ENCODE measurements at regions of chr21 and their contacts with region 1.

Region 1: DNA sequence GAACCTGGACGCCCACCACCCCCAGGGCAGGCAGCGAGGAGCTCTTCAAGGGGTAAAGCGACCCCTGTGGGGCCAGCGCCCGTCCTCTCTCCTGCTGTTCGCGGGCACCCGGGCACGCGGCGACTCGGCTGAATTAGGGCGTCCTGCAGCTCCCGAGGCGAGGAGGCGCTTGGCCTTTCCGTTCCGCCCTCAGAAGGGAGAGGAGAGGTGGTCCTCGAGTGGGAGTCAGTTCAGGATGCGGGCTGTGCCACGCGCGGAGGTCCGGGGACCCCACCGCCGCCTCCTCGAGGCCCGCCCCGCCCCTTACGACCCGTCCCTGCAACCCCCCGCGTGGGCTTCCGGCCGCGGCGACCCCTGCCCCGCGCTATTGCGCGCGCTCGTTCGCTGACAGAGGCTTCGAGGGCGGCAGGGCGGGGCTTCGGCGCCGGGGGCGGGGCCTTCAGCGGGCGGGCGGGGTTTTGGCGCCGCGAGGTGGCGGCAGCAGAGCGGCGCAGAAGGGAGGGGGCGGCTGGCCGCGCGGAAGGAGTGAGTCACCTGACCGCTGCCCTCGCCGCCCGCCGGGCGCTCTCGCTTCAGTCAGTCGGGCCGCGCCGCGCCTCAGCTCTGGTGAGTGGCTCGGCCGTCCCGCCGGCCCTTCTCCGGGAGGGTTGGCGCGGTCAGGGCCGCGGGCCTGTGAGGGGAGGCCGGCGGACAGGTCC is at the start of gene BACH1:
- DNase-seq: peak; percentile 76 to 83 (median 80)
- H3K4me3 ChIP-seq: peak within 1 kb of the TSS; percentile 32 to 67
- H3K4me3 Mint-ChIP-seq: peak within 1 kb of the TSS; percentile 86 to 95 (median 90)
- H3K27ac ChIP-seq: peak within 1 kb of the TSS; percentile 47
- H3K27ac Mint-ChIP-seq: peak within 1 kb of the TSS; percentile 70 to 94 (median 85)
- H3K4me1 ChIP-seq: peaks cover 61% of the 10 kb centered on the region
- H3K4me1 Mint-ChIP-seq: peaks cover 50 to 84% (median 68%) of the 10 kb centered on the region in 4 donors
- H3K27me3 ChIP-seq: no peaks in the 10 kb centered on the region
- H3K27me3 Mint-ChIP-seq: no peaks in the 10 kb centered on the region
- total RNA-seq, gene BACH1: 46.5 to 49.0 TPM

Region 2: GRCh38 chr21:28992526-28993292 is 305.8 kb before region 1 on chr21 and contains the start of gene LTN1:
- CTCF ChIA-PET with region 1: no interaction called
- POLR2A ChIA-PET with region 1: interaction called, 4 read pairs
- intact Hi-C with region 1: loop called (anchors 2 kb)
- DNase-seq: peak; percentile 98 to 99 (median 99)
- H3K4me3 ChIP-seq: peak within 1 kb of the TSS; percentile 87 to 98
- H3K4me3 Mint-ChIP-seq: peak within 1 kb of the TSS; percentile 90 to 98 (median 96)
- H3K27ac ChIP-seq: peak within 1 kb of the TSS; percentile 82
- H3K27ac Mint-ChIP-seq: peak within 1 kb of the TSS; percentile 85 to 100 (median 99)
- H3K4me1 ChIP-seq: peaks cover 31% of the 10 kb centered on the region
- H3K4me1 Mint-ChIP-seq: peaks cover 24 to 54% (median 36%) of the 10 kb centered on the region in 4 donors
- H3K27me3 ChIP-seq: no peaks in the 10 kb centered on the region
- H3K27me3 Mint-ChIP-seq: no peaks in the 10 kb centered on the region
- total RNA-seq, gene LTN1: 34.6 to 39.5 TPM

Region 3: GRCh38 chr21:29073222-29074006 is 225.1 kb before region 1 on chr21 and contains the start of gene CCT8:
- CTCF ChIA-PET with region 1: interaction called, 3 read pairs
- POLR2A ChIA-PET with region 1: interaction called, 42 read pairs
- intact Hi-C with region 1: loop called (anchors 1 kb)
- DNase-seq: peak; percentile 97 to 100 (median 99)
- H3K4me3 ChIP-seq: peak within 1 kb of the TSS; percentile 63 to 97
- H3K4me3 Mint-ChIP-seq: peak within 1 kb of the TSS; percentile 99 to 100 (median 100)
- H3K27ac ChIP-seq: peak within 1 kb of the TSS; percentile 88
- H3K27ac Mint-ChIP-seq: peak within 1 kb of the TSS; percentile 96 to 100 (median 99)
- H3K4me1 ChIP-seq: peaks cover 38% of the 10 kb centered on the region
- H3K4me1 Mint-ChIP-seq: peaks cover 24 to 63% (median 44%) of the 10 kb centered on the region in 4 donors
- H3K27me3 ChIP-seq: no peaks in the 10 kb centered on the region
- H3K27me3 Mint-ChIP-seq: no peaks in the 10 kb centered on the region
- total RNA-seq, gene CCT8: 109 to 114 TPM

Region 4: GRCh38 chr21:29195981-29196669 is 102.4 kb before region 1 on chr21:
- CTCF ChIA-PET with region 1: interaction called, 4 read pairs
- POLR2A ChIA-PET with region 1: interaction called, 3 read pairs
- intact Hi-C with region 1: loop called (anchors 1 kb)
- DNase-seq: peak; percentile 62 to 88 (median 70)
- H3K4me3 ChIP-seq: peak overlapping the region in 1 of 2 donors; percentile 42
- H3K4me3 Mint-ChIP-seq: peak overlapping the region; percentile 79 to 90 (median 84)
- H3K27ac ChIP-seq: no peak overlapping the region
- H3K27ac Mint-ChIP-seq: peak overlapping the region; percentile 84 to 96 (median 90)
- H3K4me1 ChIP-seq: peaks cover 22% of the 10 kb centered on the region
- H3K4me1 Mint-ChIP-seq: peaks cover 10 to 19% (median 17%) of the 10 kb centered on the region in 4 donors
- H3K27me3 ChIP-seq: no peaks in the 10 kb centered on the region
- H3K27me3 Mint-ChIP-seq: peaks cover 0 to 3% of the 10 kb centered on the region in 2 donors

Region 5: DNA sequence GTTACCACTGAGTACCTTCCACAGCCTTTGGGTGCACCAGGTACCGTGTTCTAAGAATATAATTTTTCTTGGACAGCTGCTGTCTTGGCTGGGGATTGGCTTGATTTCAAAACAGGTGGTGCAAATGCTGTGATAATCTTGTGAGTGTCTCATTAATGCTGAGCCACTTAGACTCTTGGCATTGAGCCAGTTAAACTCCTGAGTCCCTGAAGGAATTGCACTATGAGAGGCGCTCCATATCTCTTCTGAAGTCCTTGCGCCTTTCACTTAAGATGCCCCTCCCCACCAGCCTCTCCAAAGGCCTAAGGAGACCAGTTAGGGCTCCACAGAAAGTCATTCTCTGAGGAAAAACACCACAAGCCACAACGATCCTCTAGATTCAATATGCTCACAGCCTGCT is 51.2 kb after region 1 on chr21:
- CTCF ChIA-PET with region 1: interaction called, 14 read pairs
- POLR2A ChIA-PET with region 1: interaction called, 3 read pairs
- intact Hi-C with region 1: loop called (anchors 1 kb)
- DNase-seq: no peak
- H3K4me3 ChIP-seq: no peak overlapping the region
- H3K4me3 Mint-ChIP-seq: no peak overlapping the region
- H3K27ac ChIP-seq: no peak overlapping the region
- H3K27ac Mint-ChIP-seq: peak overlapping the region in 1 of 7 donors; percentile 34
- H3K4me1 ChIP-seq: peaks cover 7% of the 10 kb centered on the region
- H3K4me1 Mint-ChIP-seq: peaks cover 9 to 15% (median 12%) of the 10 kb centered on the region in 4 donors
- H3K27me3 ChIP-seq: no peaks in the 10 kb centered on the region
- H3K27me3 Mint-ChIP-seq: no peaks in the 10 kb centered on the region

Region 6: DNA sequence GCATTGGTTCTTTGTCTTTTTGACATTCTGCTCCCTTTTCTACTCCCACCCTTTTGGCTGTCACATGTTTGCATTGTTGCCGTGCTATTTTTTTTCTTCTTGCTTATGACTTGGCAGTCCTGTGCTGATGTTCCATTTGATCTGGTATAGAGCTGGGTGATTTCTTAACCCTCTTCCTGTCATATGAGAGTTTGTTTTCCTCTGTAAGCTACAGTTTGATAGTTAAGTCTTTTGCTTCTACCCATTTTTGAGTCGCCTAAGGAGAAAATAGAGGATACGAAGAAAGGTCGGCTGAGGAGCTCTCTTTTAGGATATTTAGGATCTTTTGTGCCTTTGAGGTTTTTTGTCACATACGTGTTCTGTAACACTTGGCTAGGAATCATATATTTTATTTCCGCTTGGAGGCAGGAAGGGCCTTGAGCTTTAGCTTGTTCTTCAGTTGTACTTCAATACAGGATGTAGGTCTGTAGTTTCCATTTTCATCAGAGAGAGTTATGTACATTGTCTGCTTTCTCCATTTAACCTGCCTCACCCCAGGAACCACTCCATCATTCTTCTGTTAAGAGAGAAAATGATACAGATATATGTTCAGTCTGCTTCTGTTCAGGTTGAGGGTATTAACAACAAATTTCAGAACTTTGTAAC is 150.9 kb after region 1 on chr21:
- CTCF ChIA-PET with region 1: interaction called, 3 read pairs
- POLR2A ChIA-PET with region 1: interaction called, 12 read pairs
- intact Hi-C with region 1: loop called (anchors 10 kb)
- DNase-seq: peak; percentile 41 to 86 (median 80)
- H3K4me3 ChIP-seq: no peak overlapping the region
- H3K4me3 Mint-ChIP-seq: peak overlapping the region; percentile 22 to 78 (median 64)
- H3K27ac ChIP-seq: peak overlapping the region; percentile 41
- H3K27ac Mint-ChIP-seq: peak overlapping the region; percentile 89 to 95 (median 93)
- H3K4me1 ChIP-seq: peaks cover 24% of the 10 kb centered on the region
- H3K4me1 Mint-ChIP-seq: peaks cover 16 to 40% (median 20%) of the 10 kb centered on the region in 4 donors
- H3K27me3 ChIP-seq: no peaks in the 10 kb centered on the region
- H3K27me3 Mint-ChIP-seq: no peaks in the 10 kb centered on the region

Measured in CD4-positive, alpha-beta memory T cell (primary cell).